ENCODE measurements at regions of chr9 and their contacts with region 1.

Region 1: DNA sequence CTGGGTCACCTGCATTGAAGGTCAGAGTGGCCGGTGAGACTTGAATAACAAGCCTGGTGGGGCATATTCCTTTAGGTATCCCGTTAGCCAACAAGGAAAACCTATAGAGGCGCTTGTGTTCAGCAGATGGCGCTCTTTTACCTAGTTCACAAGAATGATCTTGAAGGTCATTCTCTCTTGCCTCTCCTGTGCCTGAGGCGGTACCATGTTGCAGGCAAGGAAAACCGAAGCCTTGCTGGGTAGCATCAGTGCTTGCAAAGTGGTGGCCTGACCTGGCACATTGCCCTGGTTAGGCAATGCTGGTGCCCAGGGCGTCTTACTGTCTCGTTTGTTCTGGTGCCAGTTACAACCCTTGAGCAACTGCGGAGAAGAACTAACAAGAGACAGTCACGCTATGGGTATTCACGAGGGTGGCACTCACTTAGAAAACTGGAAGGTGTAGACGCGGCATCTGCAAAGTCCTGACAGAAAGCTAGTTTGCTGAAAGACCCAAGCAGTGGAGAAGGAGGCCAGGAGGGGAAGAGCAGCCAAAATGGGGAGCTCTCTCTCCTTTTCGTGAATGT is 56.7 kb downstream of the AOPEP start:
- DNase-seq: peak; percentile 80 to 100
- ATAC-seq: peak; percentile 96 to 100
- H3K4me3 ChIP-seq: no peak overlapping the region
- H3K27ac ChIP-seq: peak overlapping the region; percentile 86 to 91
- H3K4me1 ChIP-seq: peaks cover 60% of the 10 kb centered on the region
- CTCF ChIP-seq: peak; percentile 88
- EP300 ChIP-seq: peak; percentile 100
- POLR2A ChIP-seq: no peak
- RAD21 ChIP-seq: peak; percentile 98 to 100

Region 2: GRCh38 chr9:94743035-94743954 is 39.9 kb before region 1 on chr9:
- CTCF ChIA-PET with region 1: no interaction called
- POLR2A ChIA-PET with region 1: no interaction called
- DNase-seq: no peak
- ATAC-seq: no peak
- H3K4me3 ChIP-seq: no peak overlapping the region
- H3K27ac ChIP-seq: no peak overlapping the region
- H3K4me1 ChIP-seq: no peaks in the 10 kb centered on the region
- CTCF ChIP-seq: no peak
- EP300 ChIP-seq: no peak
- POLR2A ChIP-seq: no peak
- RAD21 ChIP-seq: no peak

Region 3: GRCh38 chr9:94805585-94805984 is 22.4 kb after region 1 on chr9:
- CTCF ChIA-PET with region 1: interaction called, 16 read pairs
- POLR2A ChIA-PET with region 1: interaction called, 11 read pairs
- DNase-seq: peak; percentile 82 to 99
- ATAC-seq: peak; percentile 87 to 94
- H3K4me3 ChIP-seq: no peak overlapping the region; the same call in 2 of the 3 replicates
- H3K27ac ChIP-seq: peak overlapping the region; percentile 92
- H3K4me1 ChIP-seq: peaks cover 90% of the 10 kb centered on the region
- CTCF ChIP-seq: no peak
- EP300 ChIP-seq: peak; percentile 95
- POLR2A ChIP-seq: no peak
- RAD21 ChIP-seq: peak; percentile 39 to 65

Region 4: GRCh38 chr9:94900222-94901018 is 117.2 kb after region 1 on chr9:
- CTCF ChIA-PET with region 1: interaction called, 48 read pairs
- POLR2A ChIA-PET with region 1: interaction called, 10 read pairs
- DNase-seq: peak in 1 of 2 experiments; percentile 83
- ATAC-seq: peak; percentile 73 to 81
- H3K4me3 ChIP-seq: peak overlapping the region; percentile 24
- H3K27ac ChIP-seq: peak overlapping the region; percentile 97 to 99
- H3K4me1 ChIP-seq: peaks cover 90% of the 10 kb centered on the region
- CTCF ChIP-seq: no peak
- EP300 ChIP-seq: peak; percentile 56 to 78; a peak in 1 of 5 replicates
- POLR2A ChIP-seq: no peak
- RAD21 ChIP-seq: no peak; a peak in 1 of 5 replicates

Region 5: GRCh38 chr9:94941211-94941875 is 158.2 kb after region 1 on chr9:
- CTCF ChIA-PET with region 1: interaction called, 11 read pairs
- POLR2A ChIA-PET with region 1: interaction called, 4 read pairs
- DNase-seq: peak; percentile 47 to 91
- ATAC-seq: peak; percentile 64 to 82
- H3K4me3 ChIP-seq: no peak overlapping the region
- H3K27ac ChIP-seq: peak overlapping the region; percentile 92 to 93
- H3K4me1 ChIP-seq: peaks cover 79% of the 10 kb centered on the region
- CTCF ChIP-seq: no peak
- EP300 ChIP-seq: peak; percentile 73 to 75; a peak in 3 of 5 replicates
- POLR2A ChIP-seq: no peak
- RAD21 ChIP-seq: peak; percentile 25 to 51; a peak in 4 of 5 replicates

Region 6: DNA sequence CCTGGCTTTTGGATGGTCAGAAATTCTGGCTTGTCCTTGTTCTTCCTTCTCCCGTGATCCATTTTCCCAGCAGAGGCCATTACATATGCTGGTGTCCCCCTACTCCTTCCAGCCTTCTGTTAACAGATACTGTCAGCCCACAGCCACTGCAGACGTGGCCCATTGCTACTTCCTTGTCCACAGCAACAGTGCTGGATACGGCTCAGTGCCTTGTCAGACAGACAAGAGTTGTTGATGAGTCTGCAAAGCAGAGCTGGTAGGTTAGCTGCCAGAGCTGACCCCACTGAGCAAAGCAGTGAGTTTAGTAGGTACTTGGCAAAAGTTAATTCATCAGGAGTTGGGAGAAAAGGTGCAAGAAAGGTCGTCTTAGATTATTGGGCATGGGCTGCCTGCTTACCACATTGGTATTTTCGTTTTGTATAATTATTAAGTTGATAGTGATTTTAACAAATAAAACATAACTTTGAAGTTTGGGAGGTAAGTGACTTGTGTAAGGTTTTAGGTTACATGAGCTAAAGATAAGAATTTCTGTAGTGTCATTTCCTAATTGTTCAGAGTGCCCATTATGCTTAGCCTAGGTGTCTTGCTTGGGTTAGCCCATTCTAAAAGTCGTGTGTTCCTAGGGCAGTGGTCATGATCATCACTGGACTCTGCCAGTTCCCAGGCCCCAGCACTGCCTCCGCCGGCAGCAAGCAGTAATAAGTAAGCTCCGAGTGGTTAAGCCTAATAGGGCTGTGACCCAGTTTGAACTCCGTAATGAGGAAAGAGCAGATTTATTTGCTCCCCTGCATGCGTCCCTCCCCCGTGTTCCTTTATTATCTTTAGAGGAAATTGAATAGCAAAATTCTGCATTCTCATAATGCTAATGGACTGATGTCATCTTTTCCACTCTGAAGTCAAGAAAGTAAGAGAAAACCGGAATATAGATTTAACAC is 242.3 kb after region 1 on chr9:
- CTCF ChIA-PET with region 1: interaction called, 31 read pairs
- POLR2A ChIA-PET with region 1: interaction called, 3 read pairs
- DNase-seq: peak in 1 of 2 experiments; percentile 93
- ATAC-seq: peak; percentile 71 to 76
- H3K4me3 ChIP-seq: peak overlapping the region; percentile 11; the same call in 1 of the 3 replicates
- H3K27ac ChIP-seq: peak overlapping the region; percentile 86 to 99
- H3K4me1 ChIP-seq: peaks cover 100% of the 10 kb centered on the region
- CTCF ChIP-seq: no peak
- EP300 ChIP-seq: peak in 1 of 2 experiments; percentile 60; a peak in 2 of 5 replicates
- POLR2A ChIP-seq: no peak
- RAD21 ChIP-seq: peak; percentile 41 to 43; a peak in 4 of 5 replicates